ENCODE measurements at regions of chr20 and their contacts with region 1.

Region 1: GRCh38 chr20:45373353-45374100 is 4.6 kb downstream of the TP53TG5 start:
- DNase-seq: peak; percentile 88
- ATAC-seq: peak; percentile 92
- H3K4me3 ChIP-seq: peak overlapping the region; percentile 42 to 64 (median 54)
- H3K4me3 Mint-ChIP-seq: peak overlapping the region; percentile 96
- H3K27ac ChIP-seq: peak overlapping the region in 1 of 2 donors; percentile 73
- H3K27ac Mint-ChIP-seq: peak overlapping the region; percentile 86
- H3K4me1 ChIP-seq: peaks cover 48 to 57% of the 10 kb centered on the region in 2 donors
- H3K4me1 Mint-ChIP-seq: peaks cover 56% of the 10 kb centered on the region
- H3K27me3 ChIP-seq: no peaks in the 10 kb centered on the region
- H3K27me3 Mint-ChIP-seq: no peaks in the 10 kb centered on the region
- CTCF ChIP-seq: peak; percentile 90

Region 2: GRCh38 chr20:45254869-45255266 is 118.7 kb before region 1 on chr20:
- CTCF ChIA-PET with region 1: no interaction called
- POLR2A ChIA-PET with region 1: no interaction called
- intact Hi-C with region 1: no loop called
- DNase-seq: no peak
- ATAC-seq: no peak
- H3K4me3 ChIP-seq: no peak overlapping the region
- H3K4me3 Mint-ChIP-seq: no peak overlapping the region
- H3K27ac ChIP-seq: no peak overlapping the region
- H3K27ac Mint-ChIP-seq: no peak overlapping the region
- H3K4me1 ChIP-seq: no peaks in the 10 kb centered on the region
- H3K4me1 Mint-ChIP-seq: no peaks in the 10 kb centered on the region
- H3K27me3 ChIP-seq: peaks cover 0 to 18% (median 12%) of the 10 kb centered on the region in 4 experiments
- H3K27me3 Mint-ChIP-seq: peaks cover 60% of the 10 kb centered on the region
- CTCF ChIP-seq: no peak

Region 3: DNA sequence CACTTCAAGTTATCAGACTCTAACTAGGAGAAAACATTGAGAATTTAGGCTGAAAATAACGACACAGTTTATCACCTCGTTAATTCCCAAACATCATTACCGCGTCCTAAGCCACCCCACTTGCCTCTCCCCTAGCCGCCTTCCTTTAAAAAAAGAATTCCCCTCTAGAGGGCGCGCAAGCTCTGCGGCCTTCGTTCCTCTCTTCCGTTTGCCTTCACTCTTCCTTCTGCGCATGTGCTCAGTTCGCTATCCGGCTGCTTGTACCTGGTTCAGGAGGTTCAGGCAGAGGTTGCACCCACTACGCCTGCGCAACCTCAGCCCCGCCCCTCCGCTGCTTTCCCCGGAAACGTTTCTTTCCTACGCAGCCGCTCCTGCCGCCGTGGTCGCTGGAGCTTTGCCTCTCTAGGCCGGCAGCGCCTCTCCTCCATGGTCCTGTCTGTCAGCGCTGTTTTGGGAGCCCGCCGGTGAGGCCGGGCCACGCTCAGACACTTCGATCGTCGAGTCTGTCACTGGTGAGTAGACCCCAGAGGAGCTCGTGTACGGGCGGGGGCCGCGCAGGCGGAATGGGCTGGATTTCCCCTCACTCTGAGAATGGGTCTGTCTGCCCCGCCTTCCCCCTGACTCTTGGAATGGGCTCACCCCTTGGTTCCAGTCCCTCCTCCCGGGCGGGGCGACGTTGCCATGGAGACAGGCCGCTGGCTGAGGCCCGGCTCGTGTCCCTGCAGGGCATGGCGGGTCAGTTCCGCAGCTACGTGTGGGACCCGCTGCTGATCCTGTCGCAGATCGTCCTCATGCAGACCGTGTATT is 10.5 kb before region 1 on chr20 and contains the start of gene SYS1:
- CTCF ChIA-PET with region 1: interaction called, 114 read pairs
- POLR2A ChIA-PET with region 1: interaction called, 38 read pairs
- intact Hi-C with region 1: loop called (anchors 1 kb)
- DNase-seq: peak; percentile 99
- ATAC-seq: peak; percentile 82
- H3K4me3 ChIP-seq: peak within 1 kb of the TSS; percentile 79 to 88 (median 85)
- H3K4me3 Mint-ChIP-seq: peak within 1 kb of the TSS; percentile 99
- H3K27ac ChIP-seq: peak within 1 kb of the TSS; percentile 86 to 99
- H3K27ac Mint-ChIP-seq: peak within 1 kb of the TSS; percentile 99
- H3K4me1 ChIP-seq: peaks cover 47 to 49% of the 10 kb centered on the region in 2 donors
- H3K4me1 Mint-ChIP-seq: peaks cover 49% of the 10 kb centered on the region
- H3K27me3 ChIP-seq: peaks cover 0 to 5% (median 0%) of the 10 kb centered on the region in 4 experiments
- H3K27me3 Mint-ChIP-seq: no peaks in the 10 kb centered on the region
- CTCF ChIP-seq: peak; percentile 86
- total RNA-seq, gene SYS1: 57.7 and 61.4 TPM in 2 replicates

Region 4: DNA sequence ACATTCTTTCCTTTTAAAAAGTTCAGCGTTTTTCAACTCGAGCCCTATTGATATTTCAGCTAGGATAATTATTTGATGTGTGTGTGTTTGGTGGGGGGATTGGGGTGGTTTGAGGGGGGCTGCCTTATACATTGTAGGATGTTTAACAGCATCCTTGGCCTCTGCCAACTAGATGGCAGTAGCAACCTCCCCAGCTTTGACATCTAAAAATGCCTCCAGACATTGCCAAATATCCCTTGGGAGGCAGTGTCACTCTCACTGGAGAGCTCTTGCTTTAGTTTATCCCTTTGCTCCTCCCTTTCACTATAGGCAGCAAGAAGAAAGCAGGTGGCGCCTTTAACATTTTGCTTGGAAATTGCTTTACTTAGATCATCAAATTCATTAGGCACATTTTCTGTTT is 19.2 kb after region 1 on chr20:
- CTCF ChIA-PET with region 1: interaction called, 15 read pairs
- POLR2A ChIA-PET with region 1: no interaction called
- intact Hi-C with region 1: no loop called
- DNase-seq: no peak
- ATAC-seq: no peak
- H3K4me3 ChIP-seq: no peak overlapping the region
- H3K4me3 Mint-ChIP-seq: no peak overlapping the region
- H3K27ac ChIP-seq: no peak overlapping the region
- H3K27ac Mint-ChIP-seq: no peak overlapping the region
- H3K4me1 ChIP-seq: no peaks in the 10 kb centered on the region
- H3K4me1 Mint-ChIP-seq: peaks cover 4% of the 10 kb centered on the region
- H3K27me3 ChIP-seq: no peaks in the 10 kb centered on the region
- H3K27me3 Mint-ChIP-seq: no peaks in the 10 kb centered on the region
- CTCF ChIP-seq: no peak

Region 5: DNA sequence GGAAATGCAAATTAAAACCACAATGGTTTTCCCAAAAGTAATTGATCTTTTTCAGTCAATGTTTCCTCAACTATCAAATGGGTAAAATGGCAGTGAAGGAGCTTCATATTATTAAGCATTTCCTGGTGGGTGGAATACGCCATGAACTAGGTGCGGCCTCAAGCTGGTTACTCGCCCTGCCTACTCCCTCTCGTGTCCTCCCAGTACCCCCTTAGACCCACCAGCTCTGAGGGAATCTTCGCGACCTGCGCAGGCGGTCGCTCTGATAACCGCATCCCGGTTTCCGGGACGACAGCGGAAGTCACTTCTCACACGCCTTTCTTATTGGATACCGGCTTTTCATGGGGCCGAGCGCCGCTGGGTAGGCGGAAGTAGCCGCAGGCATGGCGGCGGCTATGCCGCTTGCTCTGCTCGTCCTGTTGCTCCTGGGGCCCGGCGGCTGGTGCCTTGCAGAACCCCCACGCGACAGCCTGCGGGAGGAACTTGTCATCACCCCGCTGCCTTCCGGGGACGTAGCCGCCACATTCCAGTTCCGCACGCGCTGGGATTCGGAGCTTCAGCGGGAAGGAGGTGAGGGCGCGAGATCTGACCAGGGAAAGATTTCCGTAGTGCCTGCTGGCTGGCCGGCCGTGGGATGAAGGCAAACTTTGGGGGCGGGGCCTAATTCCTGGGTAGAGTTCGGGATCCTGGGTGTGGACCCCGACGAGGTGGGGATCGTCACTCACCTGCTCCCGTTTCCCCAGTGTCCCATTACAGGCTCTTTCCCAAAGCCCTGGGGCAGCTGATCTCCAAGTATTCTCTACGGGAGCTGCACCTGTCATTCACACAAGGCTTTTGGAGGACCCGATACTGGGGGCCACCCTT is 42.5 kb after region 1 on chr20 and contains the start of gene PIGT:
- CTCF ChIA-PET with region 1: interaction called, 35 read pairs
- POLR2A ChIA-PET with region 1: interaction called, 10 read pairs
- intact Hi-C with region 1: loop called (anchors 1 kb)
- DNase-seq: peak; percentile 95
- ATAC-seq: peak; percentile 75
- H3K4me3 ChIP-seq: peak within 1 kb of the TSS; percentile 80 to 97 (median 97)
- H3K4me3 Mint-ChIP-seq: peak within 1 kb of the TSS; percentile 99
- H3K27ac ChIP-seq: peak within 1 kb of the TSS; percentile 81 to 90
- H3K27ac Mint-ChIP-seq: peak within 1 kb of the TSS; percentile 100
- H3K4me1 ChIP-seq: peaks cover 30 to 38% of the 10 kb centered on the region in 2 donors
- H3K4me1 Mint-ChIP-seq: peaks cover 53% of the 10 kb centered on the region
- H3K27me3 ChIP-seq: no peaks in the 10 kb centered on the region
- H3K27me3 Mint-ChIP-seq: no peaks in the 10 kb centered on the region
- CTCF ChIP-seq: no peak
- total RNA-seq, gene PIGT: 106 and 110 TPM in 2 replicates

Measured in B cell (primary cell).